ENCODE measurements at regions of chr1 and their contacts with region 1.

Region 1: DNA sequence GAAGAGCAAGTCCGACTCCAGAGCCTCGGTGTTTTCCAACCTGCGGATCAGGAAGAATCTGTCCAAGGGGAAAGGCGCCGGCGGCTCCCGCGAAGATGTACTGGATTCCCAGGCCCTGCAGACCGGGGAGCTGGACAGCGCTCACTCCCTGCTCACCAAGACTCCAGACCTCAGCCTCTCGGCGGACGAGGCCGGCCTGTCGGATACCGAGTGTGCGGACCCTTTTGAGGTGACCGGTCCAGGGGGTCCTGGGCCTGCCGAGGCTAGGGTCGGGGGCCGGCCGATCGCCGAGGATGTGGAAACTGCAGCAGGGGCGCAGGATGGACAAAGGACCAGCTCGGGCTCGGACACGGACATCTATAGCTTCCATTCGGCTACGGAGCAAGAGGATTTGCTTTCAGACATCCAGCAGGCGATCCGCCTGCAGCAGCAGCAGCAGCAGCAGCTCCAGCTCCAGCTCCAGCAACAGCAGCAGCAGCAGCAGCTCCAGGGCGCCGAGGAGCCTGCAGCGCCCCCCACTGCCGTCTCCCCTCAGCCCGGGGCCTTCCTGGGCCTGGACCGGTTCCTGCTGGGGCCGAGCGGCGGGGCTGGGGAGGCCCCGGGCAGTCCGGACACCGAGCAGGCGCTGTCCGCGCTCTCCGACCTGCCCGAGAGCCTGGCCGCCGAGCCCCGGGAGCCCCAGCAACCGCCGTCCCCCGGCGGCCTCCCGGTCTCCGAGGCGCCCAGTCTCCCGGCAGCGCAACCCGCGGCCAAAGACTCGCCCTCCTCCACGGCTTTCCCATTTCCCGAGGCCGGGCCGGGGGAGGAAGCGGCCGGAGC is 827 bp downstream of the FMN2 start:
- DNase-seq: peak; percentile 66
- H3K4me3 ChIP-seq: peak overlapping the region; percentile 54 to 77 (median 72)
- H3K27ac ChIP-seq: peak overlapping the region in 3 of 4 donors; percentile 82 to 92 (median 85)
- H3K4me1 ChIP-seq: peaks cover 0 to 33% (median 22%) of the 10 kb centered on the region in 4 donors
- H3K27me3 ChIP-seq: peaks cover 0 to 16% (median 0%) of the 10 kb centered on the region in 3 donors
- CTCF ChIP-seq: peak in 1 of 4 experiments; percentile 12
- EP300 ChIP-seq: no peak
- POLR2A ChIP-seq: no peak

Region 2: GRCh38 chr1:239706245-239706892 is 386.1 kb before region 1 on chr1:
- intact Hi-C with region 1: no loop called
- DNase-seq: no peak
- H3K4me3 ChIP-seq: no peak overlapping the region
- H3K27ac ChIP-seq: no peak overlapping the region
- H3K4me1 ChIP-seq: peaks cover 0 to 3% (median 0%) of the 10 kb centered on the region in 4 donors
- H3K27me3 ChIP-seq: no peaks in the 10 kb centered on the region
- CTCF ChIP-seq: no peak
- EP300 ChIP-seq: no peak
- POLR2A ChIP-seq: no peak

Region 3: DNA sequence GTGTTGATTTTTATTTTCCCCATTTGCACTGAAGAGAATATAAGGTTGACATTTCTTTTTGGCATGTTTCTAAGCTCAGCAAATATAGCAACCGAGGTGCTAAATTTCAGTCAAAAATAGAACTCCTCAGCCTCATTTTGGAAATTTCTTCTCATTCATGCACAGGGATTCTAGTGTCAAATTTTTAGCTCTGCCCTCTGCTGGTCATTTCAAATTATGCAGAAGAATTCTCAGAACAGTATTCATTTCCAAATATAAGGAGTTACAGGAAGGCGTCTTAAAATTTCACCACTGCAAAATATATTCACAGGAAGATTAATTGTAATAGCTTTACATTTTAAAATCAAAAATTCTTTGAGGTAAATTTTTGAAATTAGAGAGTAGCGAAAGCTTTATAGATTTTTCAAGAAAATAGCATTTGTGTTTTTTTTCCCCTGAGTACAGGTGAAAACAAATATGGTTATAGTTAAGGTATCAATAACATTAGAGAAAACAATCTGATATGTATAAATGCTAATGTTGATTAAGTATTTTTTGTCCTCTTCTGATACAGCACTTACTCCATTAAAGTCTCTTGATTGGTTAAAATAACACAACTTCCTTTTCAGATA is 57.1 kb after region 1 on chr1:
- intact Hi-C with region 1: loop called (anchors 1 kb)
- DNase-seq: no peak
- H3K4me3 ChIP-seq: no peak overlapping the region
- H3K27ac ChIP-seq: no peak overlapping the region
- H3K4me1 ChIP-seq: no peaks in the 10 kb centered on the region
- H3K27me3 ChIP-seq: no peaks in the 10 kb centered on the region
- CTCF ChIP-seq: peak in 3 of 4 experiments; percentile 56 to 68 (median 57)
- EP300 ChIP-seq: no peak
- POLR2A ChIP-seq: no peak

Measured in sigmoid colon (tissue), 7 donors.